HCT116 (cell line): ENCODE measurements at regions of chr2 and their contacts with region 1.

Region 1: DNA sequence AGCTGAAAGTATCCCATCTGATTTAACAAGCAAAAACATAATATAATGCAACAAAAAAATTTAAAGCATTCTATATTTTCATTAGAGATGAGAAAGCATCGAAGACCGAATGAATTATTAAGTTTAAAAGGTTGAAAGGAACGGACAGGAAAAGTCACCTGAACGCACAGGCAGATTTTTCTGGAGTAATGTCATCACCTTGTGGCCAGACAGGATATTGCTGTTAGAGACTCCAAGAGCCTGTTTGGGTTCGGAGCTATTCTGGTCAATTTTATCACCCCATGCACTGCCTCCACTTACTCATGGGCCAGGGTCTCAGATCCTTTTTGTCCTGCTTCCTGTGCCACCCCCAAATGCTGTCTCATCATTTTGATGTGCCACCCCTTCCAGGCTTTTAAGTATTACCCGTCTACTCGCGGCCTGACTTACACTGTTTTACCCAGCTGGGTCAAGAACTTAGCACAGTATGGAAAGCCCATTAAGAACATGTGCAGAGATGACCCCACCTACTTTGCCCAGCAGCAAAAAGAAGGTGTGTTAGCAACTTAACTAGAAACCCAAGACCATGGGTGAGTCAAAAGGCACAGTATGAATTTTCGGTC is 27.3 kb downstream of the GKN2 start:
- DNase-seq: peak; percentile 48
- ATAC-seq: peak; percentile 94
- H3K4me3 ChIP-seq: no peak overlapping the region
- H3K27ac ChIP-seq: no peak overlapping the region
- H3K4me1 ChIP-seq: no peaks in the 10 kb centered on the region; a peak in 1 of 4 replicates
- H3K27me3 ChIP-seq: no peaks in the 10 kb centered on the region
- CTCF ChIP-seq: peak; percentile 87 to 89 (median 89)
- POLR2A ChIP-seq: no peak
- RAD21 ChIP-seq: peak; percentile 93

Region 2: GRCh38 chr2:68709421-68709911 is 215.9 kb before region 1 on chr2:
- CTCF ChIA-PET with region 1: interaction called, 81 read pairs
- POLR2A ChIA-PET with region 1: interaction called, 4 read pairs
- RAD21 ChIA-PET with region 1: interaction called in 1 of 2 experiments, 9 read pairs
- intact Hi-C with region 1: loop called (anchors 1 kb)
- DNase-seq: peak; percentile 45
- ATAC-seq: peak; percentile 98
- H3K4me3 ChIP-seq: no peak overlapping the region
- H3K27ac ChIP-seq: no peak overlapping the region
- H3K4me1 ChIP-seq: no peaks in the 10 kb centered on the region
- H3K27me3 ChIP-seq: no peaks in the 10 kb centered on the region
- CTCF ChIP-seq: peak; percentile 63 to 78 (median 77)
- POLR2A ChIP-seq: no peak
- RAD21 ChIP-seq: peak; percentile 77

Region 3: DNA sequence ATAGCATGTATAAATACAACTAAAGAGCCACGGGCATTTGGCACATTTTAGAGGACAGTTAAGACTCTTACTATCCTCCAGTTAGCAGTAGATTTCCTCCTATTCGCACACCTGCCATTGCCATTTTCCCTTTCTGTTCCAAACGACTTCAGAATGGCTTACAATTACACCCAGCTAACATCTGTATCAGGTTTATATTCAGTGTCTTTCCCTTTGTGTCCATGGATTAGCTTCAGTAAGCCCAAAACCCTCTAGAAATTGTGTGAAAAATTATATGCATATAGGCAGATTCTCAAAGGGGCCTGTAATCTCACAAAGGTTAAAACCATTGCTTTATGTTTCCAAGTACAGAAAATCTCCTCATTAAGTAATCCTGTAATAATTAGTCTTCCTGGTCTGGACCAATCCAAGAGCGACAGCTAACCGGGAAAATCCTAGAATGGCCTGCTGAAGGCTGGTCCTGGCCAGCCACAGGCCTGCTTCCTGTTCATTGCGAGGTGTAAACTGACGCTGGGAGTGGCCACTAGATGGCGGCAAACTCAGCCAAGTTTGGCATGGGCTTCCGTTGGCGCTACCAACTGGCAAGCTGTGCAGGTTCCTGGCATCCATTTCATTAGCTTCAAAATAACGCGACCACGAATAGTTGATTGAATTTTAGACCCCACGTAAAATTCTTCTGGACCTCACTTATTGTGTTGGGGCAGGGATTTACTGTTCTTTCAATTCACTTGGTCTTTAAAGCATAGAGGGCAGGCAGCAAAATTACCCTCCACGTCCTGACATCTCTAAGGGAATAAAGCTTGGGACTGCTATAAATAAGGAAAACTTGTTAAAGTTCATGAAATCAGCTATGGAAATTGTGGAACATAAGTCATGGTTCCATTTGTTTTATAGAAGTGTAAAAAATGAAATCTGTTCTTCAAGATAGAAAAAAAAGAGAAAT is 173.7 kb before region 1 on chr2:
- CTCF ChIA-PET with region 1: interaction called, 60 read pairs
- POLR2A ChIA-PET with region 1: no interaction called
- RAD21 ChIA-PET with region 1: interaction called, 5 to 9 read pairs
- intact Hi-C with region 1: loop called (anchors 1 kb)
- DNase-seq: peak; percentile 86
- ATAC-seq: peak; percentile 99
- H3K4me3 ChIP-seq: no peak overlapping the region
- H3K27ac ChIP-seq: no peak overlapping the region
- H3K4me1 ChIP-seq: no peaks in the 10 kb centered on the region
- H3K27me3 ChIP-seq: no peaks in the 10 kb centered on the region
- CTCF ChIP-seq: peak; percentile 90 to 93 (median 90)
- POLR2A ChIP-seq: no peak
- RAD21 ChIP-seq: peak; percentile 82

Region 4: DNA sequence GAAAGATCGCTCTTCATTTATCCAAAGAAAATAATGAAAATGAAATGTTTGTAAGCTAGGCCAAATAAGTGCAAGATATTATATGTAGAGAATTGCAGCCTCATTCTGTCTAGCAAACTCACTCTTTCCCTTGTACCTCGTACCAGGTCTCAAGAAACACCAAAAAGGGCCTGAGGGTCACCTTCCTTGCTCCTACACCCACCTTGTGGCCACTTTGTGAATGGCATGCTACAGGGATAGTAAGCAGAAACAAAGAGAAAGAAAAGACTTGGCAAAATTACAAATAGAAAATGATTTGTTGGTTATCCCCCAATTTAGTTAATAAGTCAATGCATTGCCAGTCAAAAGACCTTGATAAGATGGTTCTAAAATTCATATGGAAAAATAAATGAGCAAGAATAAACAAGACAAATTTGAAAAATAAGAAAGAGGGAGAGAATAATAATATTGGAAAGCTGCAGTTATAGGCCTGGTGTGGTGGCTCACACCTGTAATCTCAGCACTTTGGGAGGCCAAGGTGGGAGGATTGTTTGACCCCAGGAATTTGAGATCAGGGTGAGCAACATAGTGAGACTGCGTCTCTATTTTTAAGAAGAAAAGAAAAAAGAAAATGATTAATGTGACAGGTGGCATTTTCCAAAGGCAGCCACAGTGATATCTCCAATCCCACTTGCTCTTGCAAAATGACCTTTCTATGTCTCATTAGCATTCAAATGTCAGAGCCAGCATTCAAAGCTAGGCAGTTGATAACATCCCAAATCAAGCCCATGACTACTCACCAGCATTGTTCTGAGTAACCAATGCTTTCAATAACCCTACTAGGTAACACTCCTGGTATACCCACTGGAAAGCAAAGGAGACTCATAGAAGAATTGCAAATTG is 15.4 kb before region 1 on chr2:
- CTCF ChIA-PET with region 1: interaction called, 11 read pairs
- POLR2A ChIA-PET with region 1: no interaction called
- RAD21 ChIA-PET with region 1: no interaction called
- intact Hi-C with region 1: no loop called
- DNase-seq: peak; percentile 73
- ATAC-seq: peak; percentile 57
- H3K4me3 ChIP-seq: no peak overlapping the region
- H3K27ac ChIP-seq: no peak overlapping the region
- H3K4me1 ChIP-seq: peaks cover 20 to 23% of the 10 kb centered on the region in 2 experiments
- H3K27me3 ChIP-seq: no peaks in the 10 kb centered on the region
- CTCF ChIP-seq: peak; percentile 82 to 87 (median 83)
- POLR2A ChIP-seq: no peak
- RAD21 ChIP-seq: peak; percentile 85